Activated naive CD4-positive, alpha-beta T cell treated with anti-CD3 and anti-CD28 coated beads for 36 hours (primary cell): ENCODE measurements at regions of chr4 and their contacts with region 1.

Region 1: DNA sequence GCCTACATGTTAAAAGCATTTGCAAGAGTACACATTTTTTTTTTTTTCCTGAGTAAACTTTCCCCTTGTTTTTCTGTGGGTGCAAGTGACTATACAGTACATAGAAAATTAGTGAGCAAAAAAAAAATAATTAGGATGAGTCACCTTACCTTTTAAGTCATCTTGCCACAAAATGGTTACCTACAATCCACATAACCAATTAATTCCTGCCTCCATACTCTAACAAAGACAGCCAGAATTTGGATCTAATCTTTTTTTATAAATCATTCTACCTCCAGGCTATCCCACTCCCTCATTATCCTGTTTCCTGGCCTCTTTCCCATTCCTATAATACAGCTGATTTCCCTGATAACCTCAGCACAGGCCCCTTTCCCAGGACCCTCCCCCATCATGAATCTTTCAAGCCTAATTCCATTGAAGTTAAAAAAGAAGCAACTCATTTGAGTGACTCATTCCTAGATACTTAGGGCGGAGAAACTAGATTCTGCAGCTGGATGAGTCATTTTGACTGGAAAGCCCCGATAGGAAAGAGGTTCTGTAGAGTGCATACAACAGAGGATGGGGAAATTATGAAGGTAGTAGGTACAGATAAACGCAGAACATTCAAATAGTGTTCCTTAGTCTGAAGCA is 128.2 kb downstream of the C4orf51 start:
- DNase-seq: peak; percentile 74
- H3K4me3 Mint-ChIP-seq: peak overlapping the region; percentile 46
- H3K27ac Mint-ChIP-seq: peak overlapping the region; percentile 91
- H3K4me1 Mint-ChIP-seq: peaks cover 44% of the 10 kb centered on the region
- H3K27me3 Mint-ChIP-seq: no peaks in the 10 kb centered on the region

Region 2: DNA sequence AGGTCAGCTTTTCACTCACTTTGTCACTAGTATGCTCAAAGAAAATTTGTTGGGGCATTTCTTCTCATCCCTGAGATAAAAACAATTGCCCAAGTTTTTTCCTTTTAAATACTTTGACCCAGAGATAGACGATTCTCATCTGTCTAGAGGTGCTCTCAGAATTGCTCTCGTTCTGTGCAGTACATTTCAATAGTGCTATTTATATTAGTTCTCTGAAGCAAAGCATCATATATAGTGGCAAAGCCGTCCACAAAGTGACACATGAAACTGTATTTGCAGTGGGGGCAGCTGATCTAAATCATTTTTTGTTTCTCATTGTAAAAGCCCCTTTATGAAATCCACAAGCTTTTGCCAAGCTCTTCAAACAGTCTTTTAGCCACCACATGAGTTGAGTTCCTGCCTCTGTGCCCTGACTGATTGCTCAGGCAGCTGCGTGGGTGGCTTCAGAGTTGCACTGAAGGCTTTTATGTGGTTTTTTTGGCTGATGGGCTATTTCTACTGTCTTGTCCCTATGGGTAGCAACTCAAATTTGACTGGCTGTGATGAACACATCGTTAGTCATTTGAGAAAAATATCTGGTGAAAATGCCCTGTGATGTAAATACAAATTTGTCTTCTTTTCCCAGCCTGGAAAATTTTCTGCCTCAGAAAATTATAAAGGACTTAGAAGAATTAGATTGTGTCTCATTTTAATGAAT is 508.6 kb before region 1 on chr4:
- CTCF ChIA-PET with region 1: no interaction called
- intact Hi-C with region 1: loop called (anchors 1 kb)
- DNase-seq: peak; percentile 88
- H3K4me3 Mint-ChIP-seq: no peak overlapping the region
- H3K27ac Mint-ChIP-seq: no peak overlapping the region
- H3K4me1 Mint-ChIP-seq: peaks cover 23% of the 10 kb centered on the region
- H3K27me3 Mint-ChIP-seq: peaks cover 9% of the 10 kb centered on the region

Region 3: DNA sequence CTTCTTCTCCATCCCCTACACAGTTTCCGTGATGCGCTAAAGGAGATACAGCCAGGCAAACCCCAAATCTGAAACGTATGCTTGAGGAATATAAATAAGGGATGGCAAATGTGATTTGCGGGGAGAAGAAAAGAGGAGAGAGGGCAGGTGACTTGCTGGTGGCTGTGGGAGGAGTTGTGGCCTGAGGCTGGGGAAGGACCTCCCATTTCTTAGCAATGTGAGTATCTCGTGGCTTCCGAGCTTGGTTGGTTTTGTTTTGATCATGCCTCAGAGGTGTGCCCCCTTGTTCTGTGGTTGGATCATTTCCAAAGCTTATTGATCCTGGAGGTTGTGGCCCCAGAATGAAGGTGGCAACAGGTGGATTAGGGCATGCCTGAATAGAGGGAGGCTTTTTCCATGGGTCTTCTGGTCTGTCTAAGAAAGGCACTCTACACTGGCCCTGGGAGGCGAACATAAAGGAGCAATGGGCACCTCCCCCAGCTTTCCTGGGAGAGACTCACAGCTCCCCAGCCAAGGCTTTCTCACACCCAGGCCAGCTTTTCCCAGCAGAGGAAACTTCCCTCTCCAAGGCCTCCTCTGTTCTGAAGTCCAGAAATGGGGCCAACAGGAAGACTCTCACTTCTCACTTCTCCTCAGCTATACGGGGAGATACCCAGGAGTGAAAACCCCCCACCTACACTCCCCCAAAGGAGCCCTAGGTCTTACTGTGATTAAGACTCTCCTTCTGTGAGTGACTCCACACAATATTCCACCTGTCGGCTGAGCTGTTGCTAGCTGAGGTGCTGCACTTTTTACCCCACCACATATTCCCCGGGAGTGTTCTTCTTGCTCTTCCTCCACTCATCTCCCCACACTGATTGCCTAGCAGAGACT is 88.1 kb before region 1 on chr4:
- CTCF ChIA-PET with region 1: no interaction called
- intact Hi-C with region 1: loop called (anchors 1 kb)
- DNase-seq: peak; percentile 78
- H3K4me3 Mint-ChIP-seq: no peak overlapping the region
- H3K27ac Mint-ChIP-seq: peak overlapping the region; percentile 5
- H3K4me1 Mint-ChIP-seq: peaks cover 14% of the 10 kb centered on the region
- H3K27me3 Mint-ChIP-seq: peaks cover 10% of the 10 kb centered on the region

Region 4: GRCh38 chr4:145766273-145766672 is 41.9 kb before region 1 on chr4:
- CTCF ChIA-PET with region 1: interaction called, 3 read pairs
- intact Hi-C with region 1: loop called (anchors 2 kb)
- DNase-seq: no peak
- H3K4me3 Mint-ChIP-seq: no peak overlapping the region
- H3K27ac Mint-ChIP-seq: no peak overlapping the region
- H3K4me1 Mint-ChIP-seq: peaks cover 15% of the 10 kb centered on the region
- H3K27me3 Mint-ChIP-seq: no peaks in the 10 kb centered on the region

Region 5: DNA sequence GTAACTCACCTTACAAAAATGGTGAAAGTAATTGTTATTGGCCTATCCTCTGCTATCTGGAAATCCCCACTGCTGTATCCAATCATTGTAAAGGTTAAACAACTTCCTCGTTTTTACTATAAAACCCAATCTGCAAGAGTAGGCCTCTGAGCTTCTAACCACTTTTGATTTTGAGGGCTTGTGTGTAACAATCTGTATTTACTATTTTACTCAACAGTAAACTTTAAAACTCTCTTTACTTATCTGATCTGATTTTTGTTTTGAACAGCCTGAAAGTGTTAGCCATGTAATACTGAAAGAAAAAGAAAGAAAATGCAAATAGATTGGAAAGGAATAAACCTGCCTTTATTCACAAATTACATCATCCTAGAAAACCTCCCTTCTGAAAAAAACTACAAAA is 650.5 kb after region 1 on chr4:
- CTCF ChIA-PET with region 1: no interaction called
- intact Hi-C with region 1: loop called (anchors 1 kb)
- DNase-seq: peak; percentile 15
- H3K4me3 Mint-ChIP-seq: peak overlapping the region; percentile 63
- H3K27ac Mint-ChIP-seq: peak overlapping the region; percentile 91
- H3K4me1 Mint-ChIP-seq: peaks cover 32% of the 10 kb centered on the region
- H3K27me3 Mint-ChIP-seq: no peaks in the 10 kb centered on the region